ENCODE measurements at regions of chr11 and their contacts with region 1.

Region 1: GRCh38 chr11:124673333-124674167 is at the starts of genes SIAE and SPA17:
- DNase-seq: peak; percentile 67
- H3K4me3 ChIP-seq: peak within 1 kb of the TSS; percentile 79
- CTCF ChIP-seq: no peak

Region 2: GRCh38 chr11:124656774-124657630 is 16.5 kb before region 1 on chr11:
- CTCF ChIA-PET with region 1: interaction called, 46 read pairs
- POLR2A ChIA-PET with region 1: no interaction called
- DNase-seq: no peak
- H3K4me3 ChIP-seq: no peak overlapping the region
- CTCF ChIP-seq: no peak

Region 3: DNA sequence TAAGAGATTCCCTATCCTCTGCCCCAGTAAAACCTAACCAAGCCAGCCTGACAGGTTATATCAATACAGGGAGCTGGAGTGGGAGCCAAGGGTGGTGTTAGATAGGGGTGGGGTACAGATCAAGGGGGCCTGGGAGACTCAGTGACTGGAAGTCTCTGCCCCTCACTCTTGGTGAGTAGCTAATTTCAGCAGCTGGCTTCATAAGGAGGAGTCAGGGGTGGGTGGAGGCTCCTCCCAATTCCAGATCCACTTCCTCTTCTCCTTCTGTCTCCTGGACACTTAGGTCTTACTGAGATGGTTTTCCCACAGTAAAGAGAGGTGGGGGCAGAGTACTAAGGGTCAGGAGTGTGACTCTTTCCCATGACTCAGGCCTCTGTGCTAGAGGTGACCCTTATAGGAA is 79.7 kb after region 1 on chr11:
- CTCF ChIA-PET with region 1: interaction called, 23 read pairs
- POLR2A ChIA-PET with region 1: no interaction called
- DNase-seq: no peak
- H3K4me3 ChIP-seq: no peak overlapping the region
- CTCF ChIP-seq: no peak

Region 4: DNA sequence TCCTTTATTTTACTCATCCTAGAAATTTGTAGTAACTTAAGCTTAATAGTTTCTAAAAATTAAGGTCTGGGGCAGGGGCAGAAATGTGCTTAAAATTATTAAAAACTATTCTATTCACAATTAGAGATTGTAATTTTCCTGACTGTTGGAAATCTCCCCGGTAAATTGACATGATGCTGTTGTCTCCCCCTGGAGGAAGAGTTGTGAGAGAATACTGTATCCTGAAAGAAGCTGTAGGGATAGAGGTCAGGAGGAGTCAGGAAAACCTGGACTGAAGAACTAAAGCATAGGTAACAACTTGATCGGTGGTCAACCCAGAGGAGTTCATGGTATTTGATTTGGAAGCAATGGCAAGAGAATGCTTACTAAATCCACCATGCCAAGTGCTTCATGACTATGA is 104.7 kb after region 1 on chr11:
- CTCF ChIA-PET with region 1: interaction called, 18 read pairs
- POLR2A ChIA-PET with region 1: no interaction called
- DNase-seq: no peak
- H3K4me3 ChIP-seq: no peak overlapping the region
- CTCF ChIP-seq: no peak

Region 5: GRCh38 chr11:124800226-124800929 is 126.8 kb after region 1 on chr11 and contains the start of gene MSANTD2:
- CTCF ChIA-PET with region 1: interaction called, 58 read pairs
- POLR2A ChIA-PET with region 1: interaction called, 4 read pairs
- DNase-seq: peak; percentile 17
- H3K4me3 ChIP-seq: peak within 1 kb of the TSS; percentile 82
- CTCF ChIP-seq: no peak

Region 6: DNA sequence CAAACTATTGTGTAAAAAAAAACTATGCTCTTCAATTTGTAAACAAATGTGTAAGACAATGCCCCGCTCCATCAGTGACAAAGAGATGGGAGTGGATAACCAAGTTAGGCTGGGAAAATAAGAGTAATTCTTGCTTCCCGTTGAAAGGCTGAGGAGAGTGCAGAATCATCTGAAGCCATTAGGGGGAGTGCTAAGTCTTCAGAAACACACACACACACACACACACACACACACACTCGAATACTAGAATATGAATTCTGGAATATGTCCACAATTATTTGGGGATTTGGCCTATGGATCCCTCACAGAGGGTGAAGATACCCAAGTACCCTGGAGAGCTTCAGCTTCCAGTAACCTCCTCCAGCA is 163.9 kb after region 1 on chr11:
- CTCF ChIA-PET with region 1: interaction called, 176 read pairs
- POLR2A ChIA-PET with region 1: no interaction called
- DNase-seq: peak; percentile 56
- H3K4me3 ChIP-seq: no peak overlapping the region
- CTCF ChIP-seq: peak; percentile 67

Region 7: DNA sequence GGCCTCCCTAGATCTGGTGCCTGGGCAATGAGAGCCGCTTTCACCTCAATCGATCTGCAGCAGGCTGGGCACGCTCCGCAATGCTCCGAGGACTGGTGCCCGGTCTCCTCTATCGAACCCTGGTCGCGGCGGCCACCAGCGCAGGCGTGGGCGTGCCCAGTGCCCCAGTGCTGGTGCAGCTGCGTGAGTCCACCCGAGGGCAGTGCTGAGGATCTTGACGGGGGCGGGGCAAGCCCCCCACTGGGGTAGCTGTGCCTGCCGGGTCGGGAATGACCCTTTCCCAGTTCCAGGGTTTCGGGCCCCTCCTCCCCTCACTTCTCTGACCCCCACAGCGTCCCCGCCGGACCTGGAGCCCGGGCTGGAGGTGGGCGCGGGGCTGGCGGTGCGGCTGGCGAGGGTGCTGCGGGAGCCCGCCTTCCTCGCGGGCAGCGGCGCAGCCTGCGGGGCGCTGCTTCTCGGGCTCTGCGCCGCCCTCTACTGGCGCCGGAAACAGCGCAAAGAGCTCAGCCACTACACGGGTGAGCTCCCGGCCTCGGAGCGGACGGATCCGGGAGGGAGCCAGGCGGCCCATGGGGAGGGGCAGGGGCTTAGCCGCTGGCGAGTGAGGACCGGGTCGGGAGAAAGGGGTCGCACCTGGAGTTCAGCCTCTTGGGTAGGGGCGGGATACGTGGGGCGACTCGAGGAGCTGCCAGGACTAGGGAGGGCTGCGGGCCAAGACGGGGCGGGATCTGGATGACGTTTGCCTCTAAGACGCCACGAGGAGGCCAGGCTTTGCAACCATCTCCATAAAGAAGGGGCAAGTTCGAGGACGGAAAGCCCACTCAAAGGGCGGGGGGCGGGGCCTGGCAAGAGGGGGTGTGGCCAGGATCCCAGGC is 202.6 kb after region 1 on chr11:
- CTCF ChIA-PET with region 1: interaction called, 15 read pairs
- POLR2A ChIA-PET with region 1: interaction called, 3 read pairs
- DNase-seq: peak; percentile 53
- H3K4me3 ChIP-seq: peak overlapping the region; percentile 72
- CTCF ChIP-seq: peak; percentile 94

Measured in AG04449 (cell line).